Sciatic nerve (tissue), 2 donors: ENCODE measurements at regions of chr20 and their contacts with region 1.

Region 1: GRCh38 chr20:49928401-49929141 is 7.6 kb upstream of the RNF114 start:
- DNase-seq: peak; percentile 90
- ATAC-seq: peak; percentile 93

Region 2: DNA sequence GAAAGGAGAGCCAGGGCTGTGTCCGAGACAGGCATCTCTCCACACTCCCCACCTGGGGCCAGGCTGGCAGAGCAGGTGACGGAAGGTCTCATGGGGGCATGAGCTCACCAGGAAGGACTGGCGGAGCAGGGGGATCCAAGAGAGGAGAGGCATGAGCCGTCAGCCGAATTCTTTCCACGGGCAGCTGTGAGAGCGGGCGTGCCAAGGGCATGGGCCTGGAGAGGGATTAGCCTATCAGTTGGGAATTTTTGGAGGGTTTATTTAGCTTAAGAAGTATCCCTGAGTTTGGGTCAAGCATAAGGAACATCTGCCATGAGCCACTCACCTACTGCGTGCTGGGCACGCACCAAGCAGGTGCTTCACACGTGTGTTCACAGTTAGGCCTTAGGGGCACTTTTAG is 590.5 kb before region 1 on chr20:
- intact Hi-C with region 1: loop called (anchors 10 kb)
- DNase-seq: no peak
- ATAC-seq: no peak

Region 3: GRCh38 chr20:49516916-49517789 is 411.4 kb before region 1 on chr20:
- intact Hi-C with region 1: no loop called
- DNase-seq: no peak
- ATAC-seq: no peak

Region 4: DNA sequence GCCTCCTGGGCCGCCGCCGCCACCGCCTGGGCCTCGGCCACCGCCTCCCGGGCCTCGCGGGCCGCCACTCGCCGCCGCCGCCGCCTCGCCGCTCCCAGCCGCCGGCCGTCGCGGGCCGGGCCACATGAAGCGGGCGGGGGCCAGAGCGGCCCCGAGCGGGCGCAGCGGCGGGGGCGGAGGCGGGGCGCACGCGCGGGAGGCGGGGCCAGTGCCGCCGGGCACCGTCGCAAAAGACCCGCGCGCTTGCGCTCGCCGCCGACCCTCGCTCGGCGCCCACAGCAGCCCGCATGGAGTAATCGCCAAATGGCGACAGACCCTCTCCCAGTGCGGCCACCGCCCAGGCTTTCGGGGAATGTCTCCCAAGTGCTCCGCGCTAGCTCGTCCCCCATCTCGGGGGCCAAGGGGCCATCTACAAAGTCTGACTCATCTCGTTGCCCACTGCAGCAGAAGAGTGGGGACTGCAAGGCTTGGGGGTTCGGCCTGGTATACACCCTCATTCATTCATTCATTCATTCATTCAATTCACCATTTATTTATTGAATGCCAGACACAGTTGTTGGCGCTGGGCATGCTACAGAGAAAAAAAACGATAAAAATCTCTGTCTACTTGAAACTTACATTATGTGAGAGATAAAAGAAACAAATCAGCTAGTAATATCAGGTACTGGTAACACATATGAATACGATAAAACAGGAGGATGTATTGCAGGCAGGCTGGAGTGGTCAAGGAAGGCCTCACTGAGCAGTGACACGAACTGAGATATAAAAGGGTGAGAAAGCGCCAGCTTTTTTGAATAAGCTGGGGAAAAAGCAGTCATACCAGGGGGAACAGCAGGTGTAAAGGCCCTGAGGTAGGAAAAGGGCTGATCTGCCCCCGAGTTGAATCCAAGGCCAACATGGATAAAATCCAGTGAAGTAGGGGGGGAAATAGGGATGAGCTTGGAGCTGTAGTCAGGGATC is 214.5 kb before region 1 on chr20 and contains the start of gene B4GALT5:
- intact Hi-C with region 1: no loop called
- DNase-seq: peak; percentile 81
- ATAC-seq: peak; percentile 84
- total RNA-seq, gene B4GALT5: 36.0 TPM